ENCODE measurements at regions of chr4 and their contacts with region 1.

Region 1: GRCh38 chr4:52721968-52722815 is 29.0 kb downstream of the ERVMER34-1 start:
- DNase-seq: peak; percentile 95
- H3K4me3 Mint-ChIP-seq: peak overlapping the region; percentile 79
- H3K27ac Mint-ChIP-seq: peak overlapping the region; percentile 76
- H3K4me1 Mint-ChIP-seq: peaks cover 11% of the 10 kb centered on the region
- H3K27me3 Mint-ChIP-seq: peaks cover 3% of the 10 kb centered on the region

Region 2: DNA sequence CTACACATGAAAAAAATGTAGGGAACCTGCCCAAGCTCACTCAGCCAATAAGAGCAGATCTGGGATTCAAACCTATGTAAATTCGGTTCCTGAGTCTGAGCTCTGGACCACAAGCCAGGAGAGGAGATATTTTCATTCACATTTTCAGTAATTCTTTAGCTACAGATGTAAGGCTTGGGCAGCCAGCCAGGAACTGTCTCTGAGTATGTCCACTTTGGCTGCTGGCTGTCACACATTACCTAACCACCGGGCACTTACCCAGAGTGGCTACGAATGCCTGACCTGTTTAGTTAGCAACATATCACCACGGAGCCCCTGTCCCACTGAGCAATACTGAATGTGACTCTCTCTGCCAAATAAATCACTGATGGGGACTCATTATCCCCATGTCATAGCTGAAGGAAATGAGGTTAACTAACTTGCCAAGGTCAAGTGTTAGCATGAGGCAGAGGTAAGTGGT is 78.4 kb before region 1 on chr4:
- CTCF ChIA-PET with region 1: no interaction called
- intact Hi-C with region 1: no loop called
- DNase-seq: no peak
- H3K4me3 Mint-ChIP-seq: no peak overlapping the region
- H3K27ac Mint-ChIP-seq: no peak overlapping the region
- H3K4me1 Mint-ChIP-seq: peaks cover 12% of the 10 kb centered on the region
- H3K27me3 Mint-ChIP-seq: no peaks in the 10 kb centered on the region

Region 3: DNA sequence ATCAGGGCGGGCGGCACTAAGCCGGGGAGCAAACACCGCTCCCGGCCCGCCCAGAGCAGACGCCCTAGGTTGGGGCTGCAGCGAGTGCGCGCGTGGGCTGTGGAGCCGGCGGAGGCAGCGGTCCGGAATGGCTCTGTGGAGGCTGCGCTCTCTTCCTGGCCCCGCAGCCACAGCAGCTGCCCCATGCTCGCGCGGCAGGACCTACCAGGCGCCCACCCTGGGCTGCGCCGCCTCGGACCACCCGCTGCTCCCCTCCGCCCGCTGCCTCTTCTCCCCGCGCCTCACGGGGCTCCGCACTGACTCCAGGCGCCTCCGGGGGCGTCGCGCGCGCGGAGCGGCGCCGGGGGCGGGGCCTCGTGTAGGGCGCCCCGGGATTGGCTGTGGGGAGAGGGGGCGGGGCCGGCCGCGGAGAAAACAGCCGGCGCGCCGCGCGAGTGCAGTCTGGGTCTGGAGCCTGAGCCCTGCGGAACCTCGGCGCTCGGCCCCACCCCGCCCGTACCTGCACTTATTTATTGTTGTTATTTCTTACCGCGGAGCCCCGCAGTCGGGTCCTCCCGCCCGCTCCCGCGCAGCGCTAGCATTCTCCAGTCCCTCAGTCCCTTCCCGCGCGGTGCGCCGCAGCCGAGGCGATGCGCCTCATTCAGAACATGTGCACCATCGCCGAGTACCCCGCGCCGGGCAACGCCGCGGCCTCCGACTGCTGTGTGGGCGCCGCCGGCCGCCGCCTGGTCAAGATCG is 139.9 kb after region 1 on chr4 and contains the start of gene RASL11B:
- CTCF ChIA-PET with region 1: no interaction called
- intact Hi-C with region 1: loop called (anchors 1 kb)
- DNase-seq: peak; percentile 79
- H3K4me3 Mint-ChIP-seq: peak within 1 kb of the TSS; percentile 69
- H3K27ac Mint-ChIP-seq: no peak within 1 kb of the TSS
- H3K4me1 Mint-ChIP-seq: peaks cover 3% of the 10 kb centered on the region
- H3K27me3 Mint-ChIP-seq: peaks cover 22% of the 10 kb centered on the region
- total RNA-seq, gene RASL11B: 0.24 TPM in 1 of 2 experiments, not detected in the other

Region 4: DNA sequence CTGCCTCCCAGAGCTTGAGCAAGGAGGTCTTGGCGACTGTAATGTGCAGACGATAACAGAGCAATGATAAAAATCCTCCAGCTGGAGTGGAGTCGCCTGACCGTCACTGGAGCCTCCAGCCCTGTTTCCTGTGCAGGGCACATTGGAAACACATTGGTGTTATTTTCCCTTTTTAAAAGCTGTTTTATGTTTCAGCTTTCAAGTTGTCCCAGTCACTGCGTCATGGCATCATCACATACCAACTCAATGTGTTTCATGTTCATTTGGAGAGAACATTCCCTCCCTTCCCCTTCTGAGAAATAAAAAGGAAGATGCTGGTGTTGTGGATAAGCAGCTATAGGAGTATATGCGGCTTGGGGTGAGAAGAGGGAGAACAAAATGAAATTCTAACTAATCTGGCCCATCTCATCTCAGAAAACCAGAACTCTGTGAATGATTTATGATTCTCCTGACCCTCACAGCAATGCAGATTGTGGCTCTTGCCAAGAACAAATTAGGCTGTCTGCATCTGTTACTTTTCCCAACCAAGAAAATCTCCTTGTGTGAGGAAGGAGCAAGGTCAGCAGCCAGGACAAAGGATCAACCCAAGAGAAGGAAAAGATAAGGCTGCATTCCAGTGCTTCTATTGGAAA is 274.2 kb after region 1 on chr4:
- CTCF ChIA-PET with region 1: no interaction called
- intact Hi-C with region 1: no loop called
- DNase-seq: no peak
- H3K4me3 Mint-ChIP-seq: no peak overlapping the region
- H3K27ac Mint-ChIP-seq: no peak overlapping the region
- H3K4me1 Mint-ChIP-seq: peaks cover 4% of the 10 kb centered on the region
- H3K27me3 Mint-ChIP-seq: no peaks in the 10 kb centered on the region

Measured in activated naive CD4-positive, alpha-beta T cell treated with anti-CD3 and anti-CD28 coated beads for 36 hours (primary cell).